ENCODE measurements at regions of chr18 and their contacts with region 1.

Region 1: GRCh38 chr18:46660955-46661749 is 4.1 kb upstream of the LOXHD1 start:
- DNase-seq: no peak
- H3K4me3 ChIP-seq: no peak overlapping the region
- H3K27me3 ChIP-seq: peaks cover 6% of the 10 kb centered on the region; the same call in 1 of the 2 replicates
- CTCF ChIP-seq: no peak

Region 2: GRCh38 chr18:46148810-46149209 is 512.3 kb before region 1 on chr18:
- CTCF ChIA-PET with region 1: interaction called, 135 read pairs
- POLR2A ChIA-PET with region 1: no interaction called
- DNase-seq: no peak
- H3K4me3 ChIP-seq: no peak overlapping the region
- H3K27me3 ChIP-seq: no peaks in the 10 kb centered on the region
- CTCF ChIP-seq: peak; percentile 65

Region 3: DNA sequence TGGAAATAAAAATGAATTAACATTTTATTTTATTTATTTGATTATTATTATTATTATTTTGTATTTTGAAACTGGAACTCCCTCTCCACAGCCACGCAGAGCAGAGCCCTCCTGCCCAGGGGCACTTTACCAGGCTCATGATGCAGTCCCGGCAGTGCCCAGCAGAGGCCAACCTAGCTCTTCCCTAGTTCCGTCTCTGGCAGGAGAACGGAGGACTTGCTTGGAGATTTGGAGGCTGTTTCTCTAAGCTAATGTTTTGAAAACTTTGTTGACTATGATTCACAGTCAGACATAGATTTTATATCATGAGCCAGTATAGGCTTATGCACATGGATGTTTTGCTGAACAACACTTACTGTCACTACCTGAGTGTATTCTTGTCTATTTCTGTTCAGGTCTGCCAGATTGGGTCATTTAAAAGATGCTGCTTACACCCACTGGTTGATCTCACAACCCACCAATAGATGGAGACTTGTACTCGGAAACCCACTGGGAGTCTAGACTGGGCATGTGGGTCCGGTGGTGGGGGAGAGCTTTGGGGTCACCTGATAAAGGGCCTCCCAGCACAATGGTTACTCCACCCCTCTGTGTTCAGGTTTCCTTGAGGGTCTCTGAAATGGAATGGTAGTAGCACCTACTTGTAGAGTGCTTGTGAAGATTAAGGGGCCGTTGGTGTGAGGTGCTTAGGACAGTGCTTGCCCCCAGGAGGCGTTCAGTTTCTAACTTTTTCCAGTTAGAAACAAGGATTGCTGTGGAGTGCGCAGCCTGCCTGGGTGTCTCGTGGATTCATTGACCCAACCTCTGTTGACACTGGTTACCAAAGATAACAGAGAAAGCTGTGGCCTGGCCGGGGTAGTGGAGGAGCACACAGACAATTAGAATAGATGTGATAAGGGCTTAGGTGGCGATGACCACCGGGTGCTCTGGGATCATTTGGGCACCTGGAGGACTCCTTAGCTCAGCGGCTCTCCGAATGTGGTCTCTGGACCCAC is 379.7 kb before region 1 on chr18:
- CTCF ChIA-PET with region 1: interaction called, 51 read pairs
- POLR2A ChIA-PET with region 1: no interaction called
- DNase-seq: no peak
- H3K4me3 ChIP-seq: no peak overlapping the region
- H3K27me3 ChIP-seq: no peaks in the 10 kb centered on the region
- CTCF ChIP-seq: peak; percentile 93

Region 4: GRCh38 chr18:46555724-46556123 is 105.4 kb before region 1 on chr18:
- CTCF ChIA-PET with region 1: interaction called, 10 read pairs
- POLR2A ChIA-PET with region 1: no interaction called
- DNase-seq: no peak
- H3K4me3 ChIP-seq: no peak overlapping the region
- H3K27me3 ChIP-seq: no peaks in the 10 kb centered on the region
- CTCF ChIP-seq: peak; percentile 46

Region 5: DNA sequence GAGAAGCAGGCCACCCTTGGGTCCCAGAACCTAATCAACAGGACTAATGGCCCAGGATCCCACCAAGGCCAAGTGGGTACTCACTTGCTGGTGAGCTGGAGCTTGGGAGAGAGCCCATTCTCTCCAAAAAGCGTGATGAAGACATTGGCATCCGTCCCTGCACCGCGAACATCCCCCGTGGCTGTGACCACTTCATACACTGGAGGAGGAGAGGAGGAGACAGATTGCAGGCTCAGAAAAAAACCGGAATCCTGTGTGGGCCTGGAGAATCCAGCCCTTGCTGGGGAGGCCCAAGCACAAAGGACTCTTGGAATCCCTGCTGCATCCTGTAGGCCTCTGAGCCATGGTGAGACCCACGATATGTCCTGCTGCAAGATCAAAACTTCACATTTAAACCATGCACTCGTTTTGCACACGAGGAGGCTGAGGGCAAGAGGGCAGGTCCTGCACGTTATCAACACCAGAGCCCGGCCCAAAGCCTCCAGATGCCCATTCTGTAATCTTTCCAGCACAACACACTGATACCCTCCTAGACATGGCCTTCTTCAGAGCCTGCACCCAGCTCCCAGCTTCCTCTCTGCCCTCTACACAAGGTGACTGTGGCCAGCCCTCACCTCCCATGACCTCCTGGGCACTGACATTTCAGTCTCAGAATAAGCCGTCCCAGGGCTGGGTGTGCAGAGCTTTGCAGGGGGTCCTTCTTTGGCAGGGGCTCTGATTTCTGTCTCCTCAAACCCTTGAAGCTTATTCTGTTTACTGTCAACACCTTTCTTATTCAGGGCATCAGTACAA is 11.9 kb before region 1 on chr18:
- CTCF ChIA-PET with region 1: interaction called, 22 read pairs
- POLR2A ChIA-PET with region 1: no interaction called
- DNase-seq: no peak
- H3K4me3 ChIP-seq: no peak overlapping the region
- H3K27me3 ChIP-seq: peaks cover 2% of the 10 kb centered on the region; the same call in 1 of the 2 replicates
- CTCF ChIP-seq: no peak

Region 6: GRCh38 chr18:46672062-46672970 is 11.2 kb after region 1 on chr18:
- CTCF ChIA-PET with region 1: interaction called, 20 read pairs
- POLR2A ChIA-PET with region 1: no interaction called
- DNase-seq: no peak
- H3K4me3 ChIP-seq: no peak overlapping the region
- H3K27me3 ChIP-seq: peaks cover 2% of the 10 kb centered on the region; the same call in 1 of the 2 replicates
- CTCF ChIP-seq: no peak